ENCODE measurements at regions of chr6 and their contacts with region 1.

Region 1: GRCh38 chr6:3748208-3749066 is 3.1 kb downstream of the PXDC1 start:
- DNase-seq: peak; percentile 51 to 75 (median 53)
- H3K4me3 ChIP-seq: no peak overlapping the region
- H3K4me3 Mint-ChIP-seq: peak overlapping the region in 1 of 2 donors; percentile 86
- H3K27ac ChIP-seq: no peak overlapping the region
- H3K27ac Mint-ChIP-seq: peak overlapping the region in 1 of 7 donors; percentile 6
- H3K4me1 ChIP-seq: peaks cover 9 to 31% of the 10 kb centered on the region in 2 donors
- H3K4me1 Mint-ChIP-seq: peaks cover 20% of the 10 kb centered on the region
- H3K27me3 ChIP-seq: peaks cover 25 to 37% of the 10 kb centered on the region in 2 donors
- H3K27me3 Mint-ChIP-seq: peaks cover 39 to 55% (median 44%) of the 10 kb centered on the region in 3 donors
- CTCF ChIP-seq: peak; percentile 66

Region 2: DNA sequence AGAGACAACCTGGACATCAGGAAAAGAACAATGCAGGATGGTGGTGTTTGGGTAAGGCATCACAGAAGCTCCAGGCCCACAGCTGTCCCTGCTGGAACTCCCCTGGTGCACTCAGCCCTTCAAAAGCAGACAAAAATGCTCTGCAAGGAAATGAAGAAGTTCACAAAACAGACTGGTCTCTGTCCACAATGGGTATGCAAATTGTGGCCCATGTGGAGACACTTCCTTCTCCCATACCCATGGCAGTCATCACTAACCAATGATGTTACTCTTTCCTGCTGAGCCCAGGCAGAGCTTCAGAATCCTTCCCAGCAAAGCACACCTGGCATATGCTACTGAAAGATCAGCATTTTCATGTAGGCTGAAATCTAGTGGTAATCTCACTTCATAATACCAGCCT is 45.7 kb after region 1 on chr6:
- intact Hi-C with region 1: no loop called
- DNase-seq: no peak
- H3K4me3 ChIP-seq: no peak overlapping the region
- H3K4me3 Mint-ChIP-seq: no peak overlapping the region
- H3K27ac ChIP-seq: no peak overlapping the region
- H3K27ac Mint-ChIP-seq: peak overlapping the region in 1 of 7 donors; percentile 3
- H3K4me1 ChIP-seq: no peaks in the 10 kb centered on the region
- H3K4me1 Mint-ChIP-seq: no peaks in the 10 kb centered on the region
- H3K27me3 ChIP-seq: no peaks in the 10 kb centered on the region
- H3K27me3 Mint-ChIP-seq: peaks cover 0 to 2% (median 0%) of the 10 kb centered on the region in 3 donors
- CTCF ChIP-seq: no peak

Region 3: GRCh38 chr6:4008324-4009047 is 260.0 kb after region 1 on chr6:
- intact Hi-C with region 1: loop called (anchors 5 kb)
- DNase-seq: peak; percentile 51 to 81 (median 67)
- H3K4me3 ChIP-seq: no peak overlapping the region
- H3K4me3 Mint-ChIP-seq: no peak overlapping the region
- H3K27ac ChIP-seq: no peak overlapping the region
- H3K27ac Mint-ChIP-seq: peak overlapping the region in 5 of 7 donors; percentile 14 to 58 (median 46)
- H3K4me1 ChIP-seq: peaks cover 11% of the 10 kb centered on the region in 2 donors
- H3K4me1 Mint-ChIP-seq: peaks cover 17% of the 10 kb centered on the region
- H3K27me3 ChIP-seq: no peaks in the 10 kb centered on the region
- H3K27me3 Mint-ChIP-seq: no peaks in the 10 kb centered on the region
- CTCF ChIP-seq: peak; percentile 75

Region 4: DNA sequence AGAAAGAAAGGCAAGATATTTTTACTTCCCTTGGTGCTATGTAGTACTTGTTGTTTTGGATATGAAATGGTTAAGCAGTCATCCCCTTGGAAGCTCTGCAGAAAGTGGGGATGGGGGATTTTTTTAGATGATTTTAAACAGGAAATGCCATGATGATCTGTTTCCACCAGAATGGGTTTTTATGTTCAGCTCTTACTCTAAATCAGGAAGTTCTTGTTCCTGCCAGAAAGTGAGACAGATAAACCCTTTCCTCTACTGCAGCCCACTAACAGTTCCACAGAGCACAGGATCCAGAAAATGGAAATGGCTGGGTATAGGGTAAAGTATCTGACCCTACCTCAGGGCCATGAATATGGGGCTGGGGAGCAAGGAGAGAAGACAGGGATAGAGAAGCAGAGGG is 1304.6 kb after region 1 on chr6:
- intact Hi-C with region 1: no loop called
- DNase-seq: no peak
- H3K4me3 ChIP-seq: no peak overlapping the region
- H3K4me3 Mint-ChIP-seq: peak overlapping the region in 1 of 2 donors; percentile 72
- H3K27ac ChIP-seq: no peak overlapping the region
- H3K27ac Mint-ChIP-seq: no peak overlapping the region
- H3K4me1 ChIP-seq: peaks cover 9 to 12% of the 10 kb centered on the region in 2 donors
- H3K4me1 Mint-ChIP-seq: peaks cover 24% of the 10 kb centered on the region
- H3K27me3 ChIP-seq: no peaks in the 10 kb centered on the region
- H3K27me3 Mint-ChIP-seq: no peaks in the 10 kb centered on the region
- CTCF ChIP-seq: no peak

Measured in CD14-positive monocyte (primary cell).